ENCODE measurements at regions of chr3 and their contacts with region 1.

Region 1: DNA sequence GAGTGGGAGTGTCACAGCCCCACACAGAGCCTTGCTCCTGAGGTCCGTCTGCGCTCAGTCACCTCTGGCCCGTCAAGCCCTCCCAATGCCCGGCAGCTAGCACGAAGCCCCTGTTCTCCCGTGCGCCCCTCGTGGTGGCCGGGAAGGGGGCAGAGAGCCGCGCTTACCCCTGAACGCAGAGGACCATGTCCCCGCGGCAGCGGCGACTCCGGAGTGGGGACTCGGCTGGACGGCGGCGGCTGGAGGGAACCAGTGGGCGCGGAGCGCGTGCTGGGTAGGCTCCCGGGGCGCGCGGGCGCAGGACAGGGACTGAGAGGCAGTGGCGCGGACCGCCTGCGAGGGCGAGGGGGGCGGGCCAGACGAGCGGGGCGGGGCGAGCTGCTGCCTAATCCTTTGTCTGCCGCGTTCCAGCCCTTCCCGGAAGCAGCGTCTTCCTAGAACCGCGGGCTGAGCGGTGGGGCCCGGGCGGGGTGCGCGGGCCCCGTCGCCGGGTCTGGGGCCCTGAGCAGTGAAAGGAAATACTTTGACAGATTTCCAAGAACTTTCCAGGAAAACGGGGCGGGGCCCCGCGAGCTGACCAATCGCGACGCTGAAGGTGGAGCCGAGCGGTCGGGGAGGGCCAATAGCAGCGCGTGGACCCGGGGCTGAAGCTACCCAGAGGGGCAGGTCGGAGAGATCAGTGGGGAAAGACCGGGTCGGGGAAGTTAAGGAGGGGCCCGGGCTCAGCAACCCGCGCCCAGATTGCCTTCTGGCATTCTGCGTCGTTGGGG is at the start of gene CISH:
- DNase-seq: peak; percentile 89 to 96 (median 95)
- H3K4me3 ChIP-seq: peak within 1 kb of the TSS; percentile 70 to 92 (median 78)
- H3K27ac ChIP-seq: peak within 1 kb of the TSS; percentile 61 to 92
- H3K4me1 ChIP-seq: peaks cover 21 to 80% (median 78%) of the 10 kb centered on the region in 4 experiments
- H3K27me3 ChIP-seq: no peaks in the 10 kb centered on the region

Region 2: GRCh38 chr3:50530001-50530970 is 81.4 kb before region 1 on chr3:
- CTCF ChIA-PET with region 1: no interaction called
- POLR2A ChIA-PET with region 1: no interaction called
- DNase-seq: no peak
- H3K4me3 ChIP-seq: no peak overlapping the region
- H3K27ac ChIP-seq: no peak overlapping the region
- H3K4me1 ChIP-seq: peaks cover 0 to 5% (median 2%) of the 10 kb centered on the region in 4 experiments
- H3K27me3 ChIP-seq: peaks cover 3 to 36% (median 13%) of the 10 kb centered on the region in 5 experiments

Region 3: GRCh38 chr3:50568947-50569749 is 42.5 kb before region 1 on chr3 and contains the start of gene HEMK1:
- CTCF ChIA-PET with region 1: interaction called, 799 read pairs
- POLR2A ChIA-PET with region 1: interaction called, 6 read pairs
- DNase-seq: peak; percentile 92 to 93 (median 93)
- H3K4me3 ChIP-seq: peak within 1 kb of the TSS; percentile 69 to 98 (median 91)
- H3K27ac ChIP-seq: peak within 1 kb of the TSS; percentile 40 to 80
- H3K4me1 ChIP-seq: peaks cover 7 to 57% (median 47%) of the 10 kb centered on the region in 4 experiments
- H3K27me3 ChIP-seq: peaks cover 0 to 4% (median 0%) of the 10 kb centered on the region in 5 experiments

Region 4: DNA sequence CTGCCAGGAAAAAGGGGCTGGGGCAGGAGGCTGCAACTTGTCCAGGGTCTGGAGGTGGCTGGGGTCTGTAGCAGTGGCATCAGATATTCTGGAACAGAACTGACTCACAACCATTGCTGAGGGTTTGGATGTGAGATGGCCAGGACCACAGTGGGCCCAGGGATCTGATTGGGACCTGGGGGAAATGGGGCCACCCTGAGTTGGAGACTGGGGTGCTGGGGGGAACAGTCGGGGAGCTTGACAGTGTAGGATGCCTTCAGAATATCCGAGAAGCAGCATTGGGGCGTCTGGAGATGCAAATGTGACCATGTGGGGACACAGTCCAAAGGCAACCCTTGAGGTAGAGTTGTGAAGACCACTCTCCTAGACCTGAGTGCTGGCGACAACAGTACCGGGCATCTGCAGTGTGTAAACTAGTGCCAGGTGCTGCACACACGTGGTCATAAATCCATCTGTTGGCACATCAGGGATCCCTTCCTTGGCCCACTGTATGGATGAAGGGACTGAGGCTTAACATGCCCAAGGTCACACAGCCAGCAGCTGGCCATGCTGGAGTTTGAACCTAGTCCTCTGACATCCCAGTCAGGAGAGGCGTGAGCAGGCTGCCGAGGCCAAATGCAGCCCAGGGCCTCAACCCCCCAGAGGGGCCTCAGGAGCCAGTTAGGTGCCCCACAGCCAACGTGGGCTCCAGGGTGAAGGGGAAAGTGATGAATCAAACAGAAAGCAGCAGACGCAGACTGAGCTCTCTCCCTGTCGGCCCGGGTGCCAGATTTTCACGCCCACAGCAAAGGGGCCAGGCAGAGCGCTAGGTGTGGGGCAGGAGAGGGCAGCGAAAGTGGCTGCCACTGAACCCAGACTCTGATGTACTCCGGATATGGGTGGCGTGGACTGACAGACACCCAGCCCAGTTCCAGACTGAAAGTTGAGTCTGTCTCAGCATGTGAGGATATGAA is 23.6 kb before region 1 on chr3:
- CTCF ChIA-PET with region 1: interaction called, 449 read pairs
- POLR2A ChIA-PET with region 1: interaction called, 42 read pairs
- DNase-seq: peak in 2 of 3 donors; percentile 30 to 46
- H3K4me3 ChIP-seq: no peak overlapping the region
- H3K27ac ChIP-seq: no peak overlapping the region
- H3K4me1 ChIP-seq: peaks cover 3 to 49% (median 45%) of the 10 kb centered on the region in 4 experiments
- H3K27me3 ChIP-seq: no peaks in the 10 kb centered on the region

Region 5: GRCh38 chr3:50627407-50628051 is 15.9 kb after region 1 on chr3:
- CTCF ChIA-PET with region 1: interaction called, 256 read pairs
- POLR2A ChIA-PET with region 1: no interaction called
- DNase-seq: peak in 2 of 3 donors; percentile 64 to 78
- H3K4me3 ChIP-seq: peak overlapping the region in 2 of 7 experiments; percentile 5 to 29
- H3K27ac ChIP-seq: peak overlapping the region; percentile 22 to 69
- H3K4me1 ChIP-seq: peaks cover 32 to 100% (median 100%) of the 10 kb centered on the region in 4 experiments
- H3K27me3 ChIP-seq: no peaks in the 10 kb centered on the region

Region 6: DNA sequence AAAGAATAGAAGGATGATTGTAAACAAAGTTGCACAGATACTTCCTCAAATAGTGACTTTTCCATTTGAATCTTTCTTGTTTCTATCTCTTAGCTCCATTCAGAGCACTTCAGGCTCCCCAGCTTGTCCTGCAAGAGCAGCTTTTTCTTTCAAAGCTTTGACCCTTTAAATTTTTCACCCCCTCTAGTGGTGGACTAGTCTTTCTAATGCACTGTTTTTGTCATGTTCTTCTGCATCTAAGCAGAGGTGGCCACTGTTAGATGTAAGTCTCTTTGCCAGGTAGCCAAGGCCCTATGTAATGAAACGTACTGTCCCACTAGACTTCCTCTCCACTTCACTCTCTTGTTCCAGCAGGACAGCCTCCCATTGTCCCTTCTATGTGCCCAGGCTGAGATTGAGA is 699.4 kb after region 1 on chr3:
- CTCF ChIA-PET with region 1: interaction called, 10 read pairs
- POLR2A ChIA-PET with region 1: no interaction called
- DNase-seq: peak; percentile 37 to 63 (median 51)
- H3K4me3 ChIP-seq: no peak overlapping the region
- H3K27ac ChIP-seq: no peak overlapping the region
- H3K4me1 ChIP-seq: no peaks in the 10 kb centered on the region
- H3K27me3 ChIP-seq: no peaks in the 10 kb centered on the region

Region 7: DNA sequence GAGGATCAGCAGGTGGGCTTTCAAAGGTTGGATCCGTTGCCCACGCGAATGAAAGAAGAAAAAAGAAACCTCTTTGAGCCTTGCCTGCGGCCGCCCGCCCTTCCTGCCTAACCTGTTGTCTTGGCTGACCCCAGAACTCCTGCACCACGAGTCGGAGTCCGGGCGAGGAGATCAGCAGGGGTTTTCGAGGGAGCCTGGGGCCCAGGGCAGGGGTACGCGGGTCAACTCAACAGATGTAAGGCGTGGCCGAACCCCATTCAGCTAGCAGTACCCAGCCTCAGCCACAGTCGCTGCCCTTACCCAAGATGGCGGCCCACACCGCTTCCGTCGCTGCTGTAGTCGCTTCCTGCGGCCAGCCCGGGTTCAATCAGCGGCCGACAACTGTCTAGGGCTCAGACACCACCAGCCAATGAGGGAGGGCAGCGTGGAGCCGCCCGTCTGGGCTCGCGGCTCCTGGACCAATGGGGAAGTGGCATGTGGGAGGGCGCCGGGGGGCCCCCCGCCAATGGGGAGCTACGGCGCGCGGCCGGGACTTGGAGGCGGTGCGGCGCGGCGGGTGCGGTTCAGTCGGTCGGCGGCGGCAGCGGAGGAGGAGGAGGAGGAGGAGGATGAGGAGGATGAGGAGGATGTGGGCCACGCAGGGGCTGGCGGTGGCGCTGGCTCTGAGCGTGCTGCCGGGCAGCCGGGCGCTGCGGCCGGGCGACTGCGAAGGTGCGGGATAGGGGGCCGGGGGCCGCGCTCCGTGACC is 773.3 kb after region 1 on chr3 and contains the start of gene MANF:
- CTCF ChIA-PET with region 1: interaction called, 22 read pairs
- POLR2A ChIA-PET with region 1: interaction called, 10 read pairs
- DNase-seq: peak; percentile 99 to 100 (median 99)
- H3K4me3 ChIP-seq: peak within 1 kb of the TSS; percentile 61 to 97 (median 91)
- H3K27ac ChIP-seq: peak within 1 kb of the TSS; percentile 99
- H3K4me1 ChIP-seq: peaks cover 11 to 81% (median 68%) of the 10 kb centered on the region in 4 experiments
- H3K27me3 ChIP-seq: no peaks in the 10 kb centered on the region